ENCODE measurements at regions of chr6 and their contacts with region 1.

Region 1: GRCh38 chr6:157764178-157765033 is 58.6 kb upstream of the SNX9 start:
- DNase-seq: peak; percentile 93
- ATAC-seq: peak; percentile 69
- H3K4me3 Mint-ChIP-seq: peak overlapping the region; percentile 41
- H3K27ac Mint-ChIP-seq: peak overlapping the region; percentile 91
- H3K4me1 Mint-ChIP-seq: peaks cover 87% of the 10 kb centered on the region
- H3K27me3 Mint-ChIP-seq: peaks cover 2% of the 10 kb centered on the region

Region 2: GRCh38 chr6:157428427-157429202 is 335.8 kb before region 1 on chr6:
- CTCF ChIA-PET with region 1: no interaction called
- POLR2A ChIA-PET with region 1: interaction called, 5 read pairs
- intact Hi-C with region 1: loop called in 1 of 2 experiments (anchors 2 kb)
- DNase-seq: peak; percentile 88
- ATAC-seq: peak; percentile 89
- H3K4me3 Mint-ChIP-seq: peak overlapping the region; percentile 51
- H3K27ac Mint-ChIP-seq: peak overlapping the region; percentile 91
- H3K4me1 Mint-ChIP-seq: peaks cover 46% of the 10 kb centered on the region
- H3K27me3 Mint-ChIP-seq: no peaks in the 10 kb centered on the region

Region 3: GRCh38 chr6:157667211-157668008 is 97.0 kb before region 1 on chr6:
- CTCF ChIA-PET with region 1: interaction called, 3 read pairs
- POLR2A ChIA-PET with region 1: no interaction called
- intact Hi-C with region 1: loop called in 1 of 2 experiments (anchors 5 kb)
- DNase-seq: peak; percentile 73
- ATAC-seq: peak; percentile 48
- H3K4me3 Mint-ChIP-seq: no peak overlapping the region
- H3K27ac Mint-ChIP-seq: no peak overlapping the region
- H3K4me1 Mint-ChIP-seq: peaks cover 31% of the 10 kb centered on the region
- H3K27me3 Mint-ChIP-seq: peaks cover 5% of the 10 kb centered on the region

Region 4: GRCh38 chr6:157845493-157846259 is 81.3 kb after region 1 on chr6:
- CTCF ChIA-PET with region 1: interaction called, 5 read pairs
- POLR2A ChIA-PET with region 1: interaction called, 7 read pairs
- intact Hi-C with region 1: loop called in 1 of 2 experiments (anchors 1 kb)
- DNase-seq: no peak
- ATAC-seq: peak; percentile 72
- H3K4me3 Mint-ChIP-seq: no peak overlapping the region
- H3K27ac Mint-ChIP-seq: peak overlapping the region; percentile 72
- H3K4me1 Mint-ChIP-seq: peaks cover 93% of the 10 kb centered on the region
- H3K27me3 Mint-ChIP-seq: no peaks in the 10 kb centered on the region

Region 5: DNA sequence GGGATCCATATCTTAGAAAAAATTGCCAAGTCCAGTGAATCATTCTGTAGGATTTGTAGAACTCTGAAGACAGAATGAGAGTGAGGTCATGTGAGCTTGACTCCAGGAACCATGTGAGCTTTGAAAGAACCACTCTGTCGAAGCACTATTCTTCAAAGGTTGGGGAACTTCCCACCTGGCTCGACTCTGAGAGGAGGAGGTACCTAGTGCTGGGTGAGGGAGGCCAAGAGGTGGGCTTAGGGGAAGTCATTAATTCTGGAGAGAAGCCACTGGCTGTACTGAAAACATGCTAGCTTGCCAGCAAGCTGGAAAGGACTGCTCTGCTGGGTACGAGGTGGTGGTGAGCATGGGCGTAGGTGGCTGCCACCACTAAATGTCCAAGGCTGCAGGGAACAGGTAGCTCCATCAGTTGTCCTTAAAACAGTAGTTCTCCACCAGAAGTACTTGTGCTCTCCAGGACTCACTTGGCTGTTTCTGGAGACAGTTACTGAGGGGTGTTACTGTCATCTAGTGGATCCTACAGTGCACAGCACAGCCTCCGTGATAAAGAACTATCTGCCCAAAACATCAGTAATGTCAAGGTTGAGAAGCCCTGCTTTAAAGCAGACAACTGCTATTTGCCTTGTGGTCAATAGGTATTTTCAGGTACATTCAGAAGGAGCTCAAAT is 182.6 kb after region 1 on chr6:
- CTCF ChIA-PET with region 1: interaction called, 4 read pairs
- POLR2A ChIA-PET with region 1: no interaction called
- intact Hi-C with region 1: loop called in 1 of 2 experiments (anchors 5 kb)
- DNase-seq: no peak
- ATAC-seq: peak; percentile 64
- H3K4me3 Mint-ChIP-seq: no peak overlapping the region
- H3K27ac Mint-ChIP-seq: no peak overlapping the region
- H3K4me1 Mint-ChIP-seq: peaks cover 28% of the 10 kb centered on the region
- H3K27me3 Mint-ChIP-seq: peaks cover 2% of the 10 kb centered on the region

Region 6: DNA sequence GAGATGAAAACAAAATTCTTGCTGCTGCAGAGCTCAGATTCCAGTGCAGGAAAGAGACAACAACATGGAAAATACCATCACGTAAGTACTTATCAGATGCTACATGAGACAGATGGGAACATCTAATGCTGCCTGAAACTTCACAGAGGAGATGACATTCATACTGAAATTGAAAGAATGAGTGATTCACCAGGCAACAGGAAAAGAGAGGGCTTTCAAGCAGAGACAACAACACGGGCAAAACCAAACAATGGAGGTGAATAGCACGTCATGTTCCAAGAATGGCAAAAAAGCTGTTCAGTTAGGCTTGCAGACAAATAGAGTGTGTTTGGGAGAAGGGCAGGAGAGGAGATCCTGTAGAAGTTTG is 443.0 kb after region 1 on chr6:
- CTCF ChIA-PET with region 1: no interaction called
- POLR2A ChIA-PET with region 1: no interaction called
- intact Hi-C with region 1: loop called in 1 of 2 experiments (anchors 5 kb)
- DNase-seq: peak; percentile 57
- ATAC-seq: peak; percentile 95
- H3K4me3 Mint-ChIP-seq: peak overlapping the region; percentile 15
- H3K27ac Mint-ChIP-seq: peak overlapping the region; percentile 90
- H3K4me1 Mint-ChIP-seq: peaks cover 32% of the 10 kb centered on the region
- H3K27me3 Mint-ChIP-seq: peaks cover 5% of the 10 kb centered on the region